Activated B cell treated with CpG ODN at 0.5 μM for 24 hours (primary cell): ENCODE measurements at regions of chr5 and their contacts with region 1.

Region 1: DNA sequence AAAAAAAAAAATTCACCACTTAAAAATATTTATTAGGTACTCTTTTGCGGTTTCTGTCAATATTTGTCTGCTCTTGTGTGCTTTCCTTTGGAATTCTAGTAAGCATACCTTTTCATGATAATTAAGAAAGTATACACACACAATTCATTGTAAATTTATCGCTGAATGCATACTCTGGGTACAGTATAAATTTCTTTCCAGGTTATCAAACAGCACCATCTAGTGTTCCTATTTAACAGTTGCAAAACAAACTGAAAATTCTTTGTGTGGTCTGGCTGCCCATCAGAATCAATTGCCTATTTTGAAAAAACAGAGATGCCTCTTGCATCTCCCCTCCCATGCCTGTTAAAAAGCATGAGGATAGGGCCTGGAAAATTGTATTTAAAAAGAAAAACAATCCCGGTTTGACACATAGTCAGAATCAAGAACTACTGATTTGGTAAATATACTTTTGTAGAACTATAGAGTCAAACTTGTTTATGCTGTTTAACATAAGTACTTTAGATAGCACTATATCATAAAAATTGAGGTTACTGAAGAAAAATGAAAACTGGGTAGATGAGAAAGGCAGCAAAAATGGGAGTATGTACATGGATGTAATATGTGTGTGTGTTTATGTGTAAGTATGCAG is 16.2 kb downstream of the PGGT1B start:
- DNase-seq: no peak
- ATAC-seq: peak; percentile 31
- H3K4me3 Mint-ChIP-seq: no peak overlapping the region
- H3K27ac Mint-ChIP-seq: no peak overlapping the region
- H3K4me1 Mint-ChIP-seq: peaks cover 21% of the 10 kb centered on the region
- H3K27me3 Mint-ChIP-seq: no peaks in the 10 kb centered on the region
- CTCF ChIP-seq: peak; percentile 79

Region 2: DNA sequence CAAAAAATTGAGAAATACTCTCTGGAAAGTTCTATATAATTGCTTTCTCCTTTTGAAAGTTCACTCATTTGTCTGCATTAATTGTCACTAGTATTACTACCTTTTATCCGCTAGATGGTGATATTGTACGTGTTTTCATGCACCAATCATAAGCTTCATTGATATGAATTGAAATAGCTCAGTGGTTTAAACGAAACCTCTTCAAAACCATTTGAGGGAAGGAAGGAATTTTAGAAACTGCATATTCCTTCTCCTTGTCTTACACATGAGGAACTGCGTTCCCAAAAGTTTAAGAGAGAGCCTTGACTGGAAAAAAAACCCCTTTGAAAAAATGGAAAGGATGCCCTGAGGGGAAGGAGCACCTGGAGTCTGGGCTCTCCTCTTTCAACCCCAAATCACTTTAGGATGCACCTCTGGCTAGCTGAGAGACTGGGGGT is 1634.4 kb before region 1 on chr5:
- CTCF ChIA-PET with region 1: interaction called, 7 read pairs
- POLR2A ChIA-PET with region 1: no interaction called
- intact Hi-C with region 1: loop called (anchors 1 kb)
- DNase-seq: no peak
- ATAC-seq: peak; percentile 52
- H3K4me3 Mint-ChIP-seq: no peak overlapping the region
- H3K27ac Mint-ChIP-seq: no peak overlapping the region
- H3K4me1 Mint-ChIP-seq: no peaks in the 10 kb centered on the region
- H3K27me3 Mint-ChIP-seq: peaks cover 24% of the 10 kb centered on the region
- CTCF ChIP-seq: no peak

Region 3: DNA sequence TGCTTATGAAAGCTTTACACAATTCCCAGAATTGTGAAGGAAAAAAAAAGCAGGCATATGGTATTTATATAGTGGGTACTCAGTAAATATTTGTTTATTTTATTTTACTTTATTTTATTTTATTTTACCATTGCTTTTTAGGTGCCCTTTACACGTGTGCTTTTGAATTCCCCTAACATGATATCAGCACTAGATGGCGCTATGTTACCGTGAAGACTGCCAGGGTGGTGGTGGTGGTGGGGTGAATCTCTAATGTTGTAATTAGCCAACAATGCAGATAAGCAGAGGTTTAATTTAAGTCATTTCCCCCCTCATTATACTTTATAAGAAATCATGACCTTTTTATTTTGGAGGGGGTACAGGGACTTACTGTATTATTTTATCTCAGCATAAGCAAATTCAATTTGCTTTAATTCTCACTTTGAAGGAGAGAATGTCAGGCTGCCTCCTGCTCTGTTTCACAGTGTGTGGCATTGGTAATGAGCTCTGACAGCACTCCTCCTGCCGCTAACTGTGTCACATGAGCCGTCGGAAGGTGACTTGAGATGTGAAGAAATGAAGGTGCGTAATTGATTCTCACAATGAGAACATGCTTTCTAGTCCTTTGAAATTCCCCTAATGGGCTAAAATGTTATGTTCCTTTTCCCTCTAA is 1567.4 kb before region 1 on chr5:
- CTCF ChIA-PET with region 1: no interaction called
- POLR2A ChIA-PET with region 1: no interaction called
- intact Hi-C with region 1: loop called (anchors 5 kb)
- DNase-seq: no peak
- ATAC-seq: no peak
- H3K4me3 Mint-ChIP-seq: no peak overlapping the region
- H3K27ac Mint-ChIP-seq: no peak overlapping the region
- H3K4me1 Mint-ChIP-seq: no peaks in the 10 kb centered on the region
- H3K27me3 Mint-ChIP-seq: no peaks in the 10 kb centered on the region
- CTCF ChIP-seq: no peak

Region 4: GRCh38 chr5:114803353-114803752 is 443.1 kb before region 1 on chr5:
- CTCF ChIA-PET with region 1: no interaction called
- POLR2A ChIA-PET with region 1: no interaction called
- intact Hi-C with region 1: loop called (anchors 2 kb)
- DNase-seq: no peak
- ATAC-seq: no peak
- H3K4me3 Mint-ChIP-seq: no peak overlapping the region
- H3K27ac Mint-ChIP-seq: no peak overlapping the region
- H3K4me1 Mint-ChIP-seq: no peaks in the 10 kb centered on the region
- H3K27me3 Mint-ChIP-seq: no peaks in the 10 kb centered on the region
- CTCF ChIP-seq: no peak

Region 5: GRCh38 chr5:114898602-114899001 is 347.9 kb before region 1 on chr5:
- CTCF ChIA-PET with region 1: no interaction called
- POLR2A ChIA-PET with region 1: no interaction called
- intact Hi-C with region 1: loop called (anchors 1 kb)
- DNase-seq: no peak
- ATAC-seq: no peak
- H3K4me3 Mint-ChIP-seq: no peak overlapping the region
- H3K27ac Mint-ChIP-seq: no peak overlapping the region
- H3K4me1 Mint-ChIP-seq: no peaks in the 10 kb centered on the region
- H3K27me3 Mint-ChIP-seq: no peaks in the 10 kb centered on the region
- CTCF ChIP-seq: no peak

Region 6: DNA sequence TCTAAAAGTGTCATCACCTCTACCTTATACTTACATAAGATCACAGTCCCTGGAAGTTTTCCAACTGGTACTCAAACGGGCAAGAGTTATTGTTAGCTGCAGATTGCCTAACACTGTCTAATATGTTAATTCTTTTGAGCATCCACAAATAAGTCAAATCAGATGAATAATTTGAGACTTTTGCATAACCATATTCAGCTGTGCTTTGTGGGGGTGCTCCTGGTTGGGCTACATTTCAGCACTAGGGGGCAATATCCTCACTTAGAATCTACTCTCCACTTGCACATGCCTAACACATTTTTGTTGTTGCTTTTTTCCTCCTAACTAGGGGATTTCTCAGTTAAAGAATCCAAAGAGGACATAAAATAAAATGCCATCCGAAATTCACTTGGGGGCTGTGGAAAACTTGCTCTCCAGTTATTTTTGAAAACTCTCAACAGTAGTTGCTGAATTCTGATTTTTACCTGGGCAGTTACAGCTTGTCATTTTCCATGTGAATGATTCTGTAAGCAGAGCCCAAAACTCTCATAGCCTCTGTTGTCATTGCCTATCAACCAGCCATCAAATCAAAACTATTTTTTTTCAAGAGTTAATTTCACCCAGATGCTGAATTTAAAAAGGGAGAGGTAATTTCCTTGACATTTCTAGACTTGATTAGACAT is 148.3 kb before region 1 on chr5:
- CTCF ChIA-PET with region 1: interaction called, 135 read pairs
- POLR2A ChIA-PET with region 1: no interaction called
- intact Hi-C with region 1: loop called (anchors 1 kb)
- DNase-seq: no peak
- ATAC-seq: peak; percentile 75
- H3K4me3 Mint-ChIP-seq: no peak overlapping the region
- H3K27ac Mint-ChIP-seq: no peak overlapping the region
- H3K4me1 Mint-ChIP-seq: no peaks in the 10 kb centered on the region
- H3K27me3 Mint-ChIP-seq: peaks cover 3% of the 10 kb centered on the region
- CTCF ChIP-seq: no peak

Region 7: DNA sequence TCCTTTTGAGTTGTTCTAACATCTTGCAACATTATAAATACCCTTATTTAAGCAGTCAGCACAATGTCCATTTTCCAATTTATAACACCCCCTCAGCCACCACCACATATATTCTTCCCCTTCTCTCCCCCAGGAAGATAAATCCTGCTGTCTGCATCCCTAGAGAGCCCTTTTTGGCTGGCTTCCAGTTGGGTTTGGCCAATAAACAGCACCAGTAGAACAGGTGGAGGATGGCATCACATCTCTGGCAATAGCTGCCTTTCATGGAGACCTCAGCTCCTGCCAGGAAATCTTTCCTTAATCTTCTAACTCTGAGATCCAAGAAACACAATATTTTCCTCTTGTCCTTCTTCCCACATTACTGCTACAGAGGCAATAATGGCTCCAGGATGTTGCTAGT is 130.5 kb before region 1 on chr5:
- CTCF ChIA-PET with region 1: no interaction called
- POLR2A ChIA-PET with region 1: no interaction called
- intact Hi-C with region 1: no loop called
- DNase-seq: no peak
- ATAC-seq: no peak
- H3K4me3 Mint-ChIP-seq: no peak overlapping the region
- H3K27ac Mint-ChIP-seq: no peak overlapping the region
- H3K4me1 Mint-ChIP-seq: no peaks in the 10 kb centered on the region
- H3K27me3 Mint-ChIP-seq: peaks cover 35% of the 10 kb centered on the region
- CTCF ChIP-seq: no peak